ENCODE measurements at regions of chr5 and their contacts with region 1.

Region 1: GRCh38 chr5:54703133-54703532 is 185.6 kb downstream of the SNX18 start:
- DNase-seq: peak; percentile 44
- H3K4me3 ChIP-seq: no peak overlapping the region
- H3K27ac ChIP-seq: no peak overlapping the region
- H3K4me1 ChIP-seq: peaks cover 28% of the 10 kb centered on the region
- H3K27me3 ChIP-seq: no peaks in the 10 kb centered on the region
- CTCF ChIP-seq: no peak

Region 2: DNA sequence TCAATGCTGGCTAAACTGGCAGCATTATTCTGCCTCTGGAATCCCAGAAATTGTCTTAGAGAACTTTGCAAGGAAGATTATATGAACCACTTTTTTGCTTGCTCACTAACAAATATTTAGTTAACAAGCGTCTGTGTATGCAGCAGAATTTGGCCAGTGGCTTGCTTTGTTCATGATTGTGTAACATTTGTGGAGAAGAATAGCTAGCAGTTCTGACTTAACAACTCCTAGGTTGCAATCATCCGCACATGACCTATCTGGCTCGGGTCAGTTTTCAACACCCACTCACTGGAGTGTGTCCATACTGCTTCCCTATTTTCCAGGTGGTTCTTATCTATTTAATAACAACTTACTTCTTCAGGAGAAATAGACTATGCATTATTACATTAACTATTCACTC is 87.1 kb before region 1 on chr5:
- CTCF ChIA-PET with region 1: no interaction called
- dilution Hi-C with region 1: no loop called
- in situ Hi-C with region 1: no loop called
- intact Hi-C with region 1: no loop called
- DNase-seq: peak; percentile 21
- H3K4me3 ChIP-seq: no peak overlapping the region
- H3K27ac ChIP-seq: no peak overlapping the region
- H3K4me1 ChIP-seq: no peaks in the 10 kb centered on the region
- H3K27me3 ChIP-seq: no peaks in the 10 kb centered on the region
- CTCF ChIP-seq: no peak

Region 3: DNA sequence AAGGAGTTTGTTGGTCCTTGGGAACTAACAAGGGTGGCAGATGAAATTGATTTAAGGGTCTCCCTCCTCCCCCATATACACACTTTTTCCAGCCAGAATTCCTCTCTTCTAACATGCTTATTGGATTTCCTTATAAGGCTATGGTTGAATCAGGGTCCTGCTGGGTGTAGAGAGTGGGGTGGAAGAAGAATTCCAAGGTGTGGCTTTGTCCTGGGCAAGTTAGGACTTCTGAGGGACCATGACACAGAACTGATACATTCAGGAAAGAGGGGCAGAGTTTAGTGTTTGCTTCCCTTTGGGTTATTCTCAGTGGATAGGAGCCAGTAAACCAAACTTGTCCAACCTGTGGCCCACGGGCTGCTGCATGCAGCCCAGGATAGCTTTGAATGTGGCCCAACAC is 69.0 kb before region 1 on chr5:
- CTCF ChIA-PET with region 1: interaction called, 7 read pairs
- dilution Hi-C with region 1: no loop called
- in situ Hi-C with region 1: no loop called
- intact Hi-C with region 1: loop called (anchors 2 kb)
- DNase-seq: peak; percentile 77
- H3K4me3 ChIP-seq: no peak overlapping the region
- H3K27ac ChIP-seq: peak overlapping the region; percentile 73
- H3K4me1 ChIP-seq: peaks cover 14% of the 10 kb centered on the region
- H3K27me3 ChIP-seq: no peaks in the 10 kb centered on the region
- CTCF ChIP-seq: no peak

Region 4: GRCh38 chr5:54646356-54647101 is 56.6 kb before region 1 on chr5:
- CTCF ChIA-PET with region 1: no interaction called
- dilution Hi-C with region 1: no loop called
- in situ Hi-C with region 1: no loop called
- intact Hi-C with region 1: loop called (anchors 1 kb)
- DNase-seq: peak; percentile 59
- H3K4me3 ChIP-seq: no peak overlapping the region
- H3K27ac ChIP-seq: no peak overlapping the region
- H3K4me1 ChIP-seq: peaks cover 46% of the 10 kb centered on the region
- H3K27me3 ChIP-seq: no peaks in the 10 kb centered on the region
- CTCF ChIP-seq: no peak

Region 5: GRCh38 chr5:54678737-54679136 is 24.4 kb before region 1 on chr5:
- CTCF ChIA-PET with region 1: interaction called, 13 read pairs
- dilution Hi-C with region 1: no loop called
- in situ Hi-C with region 1: no loop called
- intact Hi-C with region 1: no loop called
- DNase-seq: no peak
- H3K4me3 ChIP-seq: no peak overlapping the region
- H3K27ac ChIP-seq: no peak overlapping the region
- H3K4me1 ChIP-seq: no peaks in the 10 kb centered on the region
- H3K27me3 ChIP-seq: no peaks in the 10 kb centered on the region
- CTCF ChIP-seq: no peak

Region 6: DNA sequence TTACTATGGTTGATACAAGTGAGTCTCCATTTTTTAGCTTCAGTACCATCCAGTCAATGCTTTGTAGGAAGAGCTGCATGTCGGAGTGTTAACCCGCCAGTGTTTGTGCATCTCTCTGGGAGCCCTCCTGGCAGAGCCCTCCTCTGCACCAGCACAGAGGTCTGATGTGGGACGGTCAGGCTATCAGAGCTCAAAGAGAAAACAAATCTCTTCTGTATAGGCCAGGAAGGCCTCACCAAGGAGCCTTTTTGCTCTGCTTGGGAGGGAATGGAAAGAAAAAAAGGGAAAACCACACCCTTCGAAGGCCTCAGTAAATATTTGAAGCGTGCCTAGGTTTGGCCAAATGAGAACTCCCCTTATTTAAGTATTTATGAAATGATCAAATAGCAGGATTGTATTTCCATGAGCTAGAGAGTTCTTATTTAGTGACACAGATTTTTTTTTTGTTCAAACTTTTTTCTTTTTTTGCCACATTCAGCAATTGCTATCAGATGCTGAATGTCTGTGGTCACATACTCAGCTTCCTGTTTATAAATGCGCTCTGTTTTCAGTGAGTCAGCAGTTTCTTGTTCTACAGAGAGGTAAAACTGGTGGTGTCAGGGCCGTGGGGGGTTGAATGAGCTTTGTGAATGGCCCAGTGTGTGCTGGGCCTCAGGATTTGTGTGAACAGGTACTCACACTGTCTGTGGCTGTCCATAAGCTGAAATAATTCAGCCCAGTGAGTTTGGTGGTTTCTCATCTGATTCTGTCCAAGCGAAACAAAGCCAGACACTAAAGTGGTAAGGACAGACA is 41.1 kb after region 1 on chr5:
- CTCF ChIA-PET with region 1: no interaction called
- dilution Hi-C with region 1: no loop called
- in situ Hi-C with region 1: no loop called
- intact Hi-C with region 1: loop called (anchors 1 kb)
- DNase-seq: peak; percentile 95
- H3K4me3 ChIP-seq: no peak overlapping the region
- H3K27ac ChIP-seq: peak overlapping the region; percentile 64
- H3K4me1 ChIP-seq: peaks cover 31% of the 10 kb centered on the region
- H3K27me3 ChIP-seq: no peaks in the 10 kb centered on the region
- CTCF ChIP-seq: no peak